A549 (cell line): ENCODE measurements at regions of chr9 and their contacts with region 1.

Region 1: GRCh38 chr9:137108608-137109249 is 5.8 kb downstream of the DPP7 start:
- DNase-seq: no peak
- ATAC-seq: no peak
- H3K4me3 ChIP-seq: no peak overlapping the region
- H3K27ac ChIP-seq: no peak overlapping the region
- H3K4me1 ChIP-seq: no peaks in the 10 kb centered on the region
- CTCF ChIP-seq: no peak
- EP300 ChIP-seq: no peak
- POLR2A ChIP-seq: no peak
- RAD21 ChIP-seq: no peak

Region 2: GRCh38 chr9:137064027-137064879 is 44.5 kb before region 1 on chr9:
- CTCF ChIA-PET with region 1: interaction called, 15 read pairs
- POLR2A ChIA-PET with region 1: no interaction called
- DNase-seq: peak in 1 of 2 experiments; percentile 64
- ATAC-seq: peak; percentile 67 to 78
- H3K4me3 ChIP-seq: no peak overlapping the region
- H3K27ac ChIP-seq: peak overlapping the region in 1 of 2 experiments; percentile 64; a peak in 4 of 6 replicates
- H3K4me1 ChIP-seq: peaks cover 15% of the 10 kb centered on the region
- CTCF ChIP-seq: peak; percentile 78
- EP300 ChIP-seq: no peak
- POLR2A ChIP-seq: no peak
- RAD21 ChIP-seq: peak; percentile 60 to 65

Region 3: DNA sequence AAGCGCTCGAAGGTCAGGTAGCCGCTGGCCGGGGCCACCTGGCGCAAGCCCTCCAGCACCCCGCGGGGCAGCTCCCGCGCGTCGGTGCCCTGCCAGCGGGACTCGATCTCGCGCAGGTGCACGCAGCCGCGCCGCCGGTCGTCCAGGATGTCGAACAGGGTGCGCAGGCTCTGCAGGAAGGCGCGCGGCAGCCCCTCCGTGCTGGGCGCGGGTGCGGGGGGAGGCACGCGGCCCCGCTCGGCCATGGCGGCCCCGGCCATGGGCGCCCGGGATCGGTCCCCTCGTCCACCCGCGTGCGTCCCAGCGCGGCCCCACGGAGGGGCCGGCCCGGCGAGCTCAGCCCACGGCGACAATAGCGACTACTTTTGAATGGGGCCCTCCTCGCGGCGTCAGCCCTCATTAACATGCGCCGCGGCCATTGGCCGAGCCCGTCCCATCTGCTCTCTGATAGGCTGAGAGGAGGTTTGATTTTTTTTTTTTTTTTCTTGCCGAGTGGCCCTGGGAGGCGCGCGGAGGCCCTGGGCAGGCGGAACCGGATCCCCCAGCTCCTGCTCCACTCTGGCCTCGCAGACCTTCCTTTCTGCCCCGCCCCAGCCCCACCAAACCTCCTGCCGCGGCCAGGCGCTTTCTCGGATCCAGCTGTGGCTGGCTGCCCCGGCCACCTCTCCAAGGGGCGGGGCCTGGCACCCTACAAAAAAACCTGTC is 38.4 kb before region 1 on chr9 and contains the start of gene SAPCD2:
- CTCF ChIA-PET with region 1: interaction called, 15 read pairs
- POLR2A ChIA-PET with region 1: no interaction called
- DNase-seq: peak; percentile 86 to 88
- ATAC-seq: peak; percentile 73 to 89
- H3K4me3 ChIP-seq: peak within 1 kb of the TSS; percentile 52
- H3K27ac ChIP-seq: peak within 1 kb of the TSS; percentile 68 to 88
- H3K4me1 ChIP-seq: peaks cover 27% of the 10 kb centered on the region
- CTCF ChIP-seq: no peak; the same call in 2 of the 3 replicates
- EP300 ChIP-seq: no peak
- POLR2A ChIP-seq: peak; percentile 29; the same call in 1 of the 2 replicates
- RAD21 ChIP-seq: no peak
- polyA plus RNA-seq, gene SAPCD2: 6.5 and 6.9 TPM in 2 replicates

Region 4: GRCh38 chr9:137086531-137087408 is 22.0 kb before region 1 on chr9 and contains the start of gene MAN1B1:
- CTCF ChIA-PET with region 1: interaction called, 39 read pairs
- POLR2A ChIA-PET with region 1: interaction called, 4 read pairs
- DNase-seq: peak; percentile 94 to 100
- ATAC-seq: peak; percentile 79 to 89
- H3K4me3 ChIP-seq: peak within 1 kb of the TSS; percentile 88
- H3K27ac ChIP-seq: peak within 1 kb of the TSS; percentile 95 to 100
- H3K4me1 ChIP-seq: peaks cover 41% of the 10 kb centered on the region
- CTCF ChIP-seq: no peak
- EP300 ChIP-seq: no peak
- POLR2A ChIP-seq: peak; percentile 89
- RAD21 ChIP-seq: no peak
- polyA plus RNA-seq, gene MAN1B1: 31.7 and 47.8 TPM in 2 replicates

Region 5: DNA sequence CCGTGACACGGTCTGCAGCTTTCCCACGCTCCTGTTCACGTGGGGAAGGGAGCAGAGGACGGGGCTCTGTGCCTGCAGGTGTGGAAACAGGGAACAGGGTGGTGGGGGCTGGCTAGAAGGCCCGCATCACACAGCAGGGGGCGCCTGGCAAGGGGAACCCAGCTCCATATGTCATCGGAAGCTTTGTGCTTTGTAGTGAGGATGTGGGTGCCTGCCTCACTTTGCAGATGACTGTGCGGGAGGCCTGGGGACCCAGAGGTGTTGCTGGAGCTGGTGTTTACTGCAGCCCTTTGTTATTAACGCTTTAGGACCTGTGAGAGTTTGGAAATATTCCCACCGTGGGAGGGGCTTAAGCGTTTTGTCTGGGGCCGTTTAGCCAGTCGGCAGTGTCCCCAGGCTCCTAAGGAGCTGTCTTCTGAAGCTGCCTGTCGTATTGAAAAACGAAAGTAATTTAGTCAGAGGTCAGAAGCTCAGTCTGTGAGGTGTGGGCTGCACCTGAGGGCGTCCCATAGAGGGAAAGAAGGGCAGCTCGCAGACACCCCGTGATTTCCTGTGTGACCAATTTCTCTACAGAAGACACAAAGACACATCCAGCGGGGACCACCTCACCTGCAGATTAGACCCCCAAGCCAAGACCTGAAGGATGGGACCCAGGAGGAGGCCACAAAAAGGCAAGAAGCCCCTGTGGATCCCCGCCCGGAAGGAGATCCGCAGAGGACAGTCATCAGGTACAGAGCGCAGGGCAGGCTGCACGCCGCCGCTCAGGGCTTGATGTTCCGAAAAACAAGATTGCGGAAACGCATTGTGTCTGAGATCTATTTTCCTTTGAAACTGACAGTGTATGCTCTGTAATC is 12.8 kb before region 1 on chr9:
- CTCF ChIA-PET with region 1: interaction called, 39 read pairs
- POLR2A ChIA-PET with region 1: no interaction called
- DNase-seq: no peak
- ATAC-seq: peak; percentile 40 to 63; a peak in 3 of 6 replicates
- H3K4me3 ChIP-seq: no peak overlapping the region
- H3K27ac ChIP-seq: no peak overlapping the region
- H3K4me1 ChIP-seq: no peaks in the 10 kb centered on the region
- CTCF ChIP-seq: no peak
- EP300 ChIP-seq: no peak
- POLR2A ChIP-seq: no peak
- RAD21 ChIP-seq: no peak

Region 6: DNA sequence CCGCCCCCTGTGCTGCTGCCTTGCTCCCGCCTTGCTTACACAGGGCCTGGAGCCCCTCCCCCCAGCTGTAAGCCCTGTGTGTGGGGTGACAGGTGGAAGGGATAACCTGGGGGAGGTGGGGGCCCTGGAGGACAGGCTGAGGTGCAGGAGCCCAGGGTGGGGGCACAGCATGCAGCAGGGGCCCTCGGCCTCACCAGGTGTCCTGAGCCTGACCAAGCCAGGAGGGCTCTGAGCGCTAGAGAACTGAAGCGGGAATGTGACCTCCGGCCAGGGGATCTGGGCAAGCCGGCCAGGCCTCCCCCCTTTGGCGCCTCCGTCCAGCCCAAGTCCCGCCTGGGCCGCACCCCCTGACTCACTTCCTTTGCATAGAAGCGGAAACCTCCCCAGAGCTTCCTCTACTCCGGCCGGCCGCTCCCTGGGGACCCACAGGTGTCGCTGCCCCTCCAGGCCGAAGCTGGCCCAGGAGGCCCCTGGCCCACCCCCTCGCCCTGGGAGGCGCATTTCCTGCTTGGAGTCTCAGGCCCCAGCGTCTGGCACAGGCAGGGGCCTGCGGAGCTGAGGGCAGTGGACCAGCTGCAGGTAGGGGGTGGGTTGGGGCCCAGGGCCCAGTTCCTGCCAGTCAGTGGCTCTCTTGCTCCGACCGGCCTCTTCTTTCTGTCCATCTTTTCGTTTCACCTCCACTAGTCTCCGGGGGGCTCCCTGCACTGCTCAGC is 168.8 kb after region 1 on chr9 and contains the start of gene TOR4A:
- CTCF ChIA-PET with region 1: no interaction called
- POLR2A ChIA-PET with region 1: no interaction called
- DNase-seq: peak; percentile 89 to 92
- ATAC-seq: peak; percentile 79 to 89
- H3K4me3 ChIP-seq: peak within 1 kb of the TSS; percentile 72
- H3K27ac ChIP-seq: peak within 1 kb of the TSS; percentile 94 to 96
- H3K4me1 ChIP-seq: peaks cover 35% of the 10 kb centered on the region
- CTCF ChIP-seq: peak; percentile 33; the same call in 1 of the 3 replicates
- EP300 ChIP-seq: peak in 1 of 2 experiments; percentile 15; a peak in 1 of 5 replicates
- POLR2A ChIP-seq: peak; percentile 56
- RAD21 ChIP-seq: peak in 1 of 2 experiments; percentile 29; a peak in 3 of 5 replicates
- polyA plus RNA-seq, gene TOR4A: 8.7 and 9.8 TPM in 2 replicates